ENCODE measurements at regions of chr3 and their contacts with region 1.

Region 1: DNA sequence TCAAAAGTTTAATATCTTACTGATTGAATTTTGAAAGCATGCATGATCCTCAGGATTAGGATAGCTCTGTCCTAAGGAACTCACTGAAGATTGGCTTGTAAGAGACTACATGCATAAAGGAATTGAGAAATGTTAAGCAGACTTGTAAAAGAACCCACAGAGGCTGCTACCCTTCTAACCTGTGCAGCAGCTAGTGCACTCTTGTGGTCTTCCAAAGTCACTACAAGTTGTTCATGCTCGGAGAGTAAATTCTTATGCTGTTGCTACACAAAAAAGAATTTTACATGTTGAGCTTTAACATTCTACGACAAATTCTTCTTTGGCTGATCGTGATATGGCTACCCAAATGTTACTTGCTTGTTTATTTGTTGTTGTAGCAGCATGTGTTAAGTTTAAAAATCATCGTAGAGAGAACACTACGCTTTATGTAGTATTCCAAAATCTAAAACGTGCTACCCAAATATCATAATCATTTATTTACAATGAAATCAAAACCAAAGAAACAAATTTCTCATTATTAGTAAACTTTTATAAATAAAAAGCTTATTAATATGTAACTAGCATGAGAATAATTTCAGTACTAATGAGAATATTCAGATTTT is 55.0 kb downstream of the GOLIM4 start:
- DNase-seq: no peak
- H3K4me3 Mint-ChIP-seq: no peak overlapping the region
- H3K27ac Mint-ChIP-seq: no peak overlapping the region
- H3K4me1 Mint-ChIP-seq: no peaks in the 10 kb centered on the region
- H3K27me3 Mint-ChIP-seq: no peaks in the 10 kb centered on the region

Region 2: DNA sequence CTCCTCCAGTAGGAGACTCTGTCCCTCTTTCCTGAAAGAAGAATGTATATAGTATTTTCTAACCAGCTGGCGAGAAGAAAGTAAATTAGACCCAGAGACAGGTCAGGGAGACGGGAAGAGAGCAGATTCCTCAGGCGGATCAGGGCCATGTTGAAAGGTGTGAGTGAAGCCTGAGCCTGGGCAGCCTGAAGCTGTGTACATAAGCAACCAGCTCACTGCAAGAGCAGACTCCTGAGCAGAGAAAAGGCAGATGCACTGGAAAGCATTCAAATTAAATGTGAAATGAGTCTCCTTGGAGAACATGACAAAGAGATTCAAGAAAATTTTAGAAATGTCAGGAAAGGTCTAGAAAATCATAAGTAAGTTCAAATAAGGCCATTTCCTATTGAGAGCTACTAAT is 110.7 kb before region 1 on chr3:
- CTCF ChIA-PET with region 1: interaction called, 20 read pairs
- DNase-seq: no peak
- H3K4me3 Mint-ChIP-seq: no peak overlapping the region
- H3K27ac Mint-ChIP-seq: no peak overlapping the region
- H3K4me1 Mint-ChIP-seq: no peaks in the 10 kb centered on the region
- H3K27me3 Mint-ChIP-seq: no peaks in the 10 kb centered on the region

Region 3: DNA sequence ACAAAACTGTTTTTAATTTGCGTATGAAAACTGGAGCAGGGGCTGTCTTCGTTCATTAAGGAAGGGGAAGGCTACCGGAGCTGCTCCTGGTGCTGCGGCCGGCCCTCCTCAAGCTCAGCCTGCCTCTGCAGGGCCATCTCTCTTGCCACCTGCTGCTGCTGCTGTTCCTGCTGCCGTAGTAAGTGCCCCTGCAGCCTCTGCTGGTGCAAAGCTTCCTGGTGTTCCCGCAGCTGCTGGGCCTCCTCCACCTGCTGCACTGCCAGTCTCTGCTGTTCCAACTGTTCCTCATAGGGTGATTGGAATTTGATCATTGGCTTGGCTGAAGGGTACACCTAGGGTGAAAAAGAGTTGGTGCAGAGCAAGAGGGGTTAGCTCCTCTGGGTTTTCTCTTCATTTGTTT is 11.0 kb before region 1 on chr3:
- CTCF ChIA-PET with region 1: interaction called, 13 read pairs
- DNase-seq: no peak
- H3K4me3 Mint-ChIP-seq: no peak overlapping the region
- H3K27ac Mint-ChIP-seq: no peak overlapping the region
- H3K4me1 Mint-ChIP-seq: peaks cover 5% of the 10 kb centered on the region
- H3K27me3 Mint-ChIP-seq: no peaks in the 10 kb centered on the region

Measured in activated naive CD4-positive, alpha-beta T cell treated with anti-CD3 and anti-CD28 coated beads, Interleukin-2, amount 10 ng/mL, durations not matched to agents 7 days and 5 days (primary cell).